Activated CD4-positive, alpha-beta memory T cell treated with anti-CD3 and anti-CD28 coated beads for 36 hours (primary cell): ENCODE measurements at regions of chr1 and their contacts with region 1.

Region 1: GRCh38 chr1:179293340-179294327 is at the start of gene SOAT1:
- DNase-seq: peak; percentile 95
- H3K4me3 Mint-ChIP-seq: peak within 1 kb of the TSS; percentile 97
- H3K27ac Mint-ChIP-seq: peak within 1 kb of the TSS; percentile 91
- H3K4me1 Mint-ChIP-seq: peaks cover 41% of the 10 kb centered on the region
- H3K27me3 Mint-ChIP-seq: no peaks in the 10 kb centered on the region
- total RNA-seq, gene SOAT1: 37.8 to 42.9 TPM

Region 2: DNA sequence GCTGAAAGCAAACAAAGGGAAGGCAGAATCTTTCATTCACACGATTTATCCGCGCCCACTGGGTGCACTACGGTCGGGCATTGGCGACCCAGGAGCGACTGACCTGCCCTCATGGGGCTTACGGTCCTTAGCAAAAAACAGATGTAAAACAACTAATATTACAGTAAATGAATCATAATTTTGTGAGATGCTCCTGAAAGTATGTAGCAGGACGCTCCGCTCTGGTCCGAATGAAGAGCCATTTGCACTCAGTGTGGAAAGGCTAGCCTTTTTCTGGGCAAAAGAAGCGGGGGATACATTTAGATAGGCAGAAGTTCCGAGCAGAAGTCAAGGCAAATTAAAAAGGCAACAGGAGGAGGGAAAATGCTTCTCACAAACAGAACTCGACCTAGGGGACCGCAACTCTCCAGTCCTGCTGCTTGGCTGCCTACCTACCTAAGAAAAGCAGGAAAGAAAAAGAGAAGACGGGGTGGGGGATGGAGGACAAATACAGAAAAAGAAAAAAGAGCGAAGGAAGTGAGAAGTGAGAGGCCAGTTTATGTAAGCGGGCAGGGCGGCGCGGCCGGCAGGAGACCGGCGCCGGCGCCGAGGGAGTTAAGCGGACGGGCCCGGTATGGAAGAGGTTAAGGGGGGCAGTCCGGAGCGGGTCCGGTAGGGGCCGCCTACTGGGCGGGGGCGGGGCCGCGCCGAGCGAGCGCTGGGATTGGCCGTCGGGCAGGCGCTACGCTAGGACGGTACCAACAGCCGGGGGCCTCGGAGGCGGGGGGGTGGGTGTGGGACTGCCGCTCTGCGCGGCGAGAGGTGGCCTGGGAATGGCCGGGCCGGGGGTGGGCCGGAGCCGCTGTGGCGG is 268.3 kb before region 1 on chr1 and contains the start of gene FAM20B:
- CTCF ChIA-PET with region 1: no interaction called
- POLR2A ChIA-PET with region 1: no interaction called
- intact Hi-C with region 1: loop called (anchors 2 kb)
- DNase-seq: peak; percentile 94
- H3K4me3 Mint-ChIP-seq: peak within 1 kb of the TSS; percentile 87
- H3K27ac Mint-ChIP-seq: peak within 1 kb of the TSS; percentile 85
- H3K4me1 Mint-ChIP-seq: peaks cover 37% of the 10 kb centered on the region
- H3K27me3 Mint-ChIP-seq: no peaks in the 10 kb centered on the region
- total RNA-seq, gene FAM20B: 38.1 to 39.2 TPM

Region 3: GRCh38 chr1:179121159-179121938 is 172.3 kb before region 1 on chr1:
- CTCF ChIA-PET with region 1: interaction called, 24 read pairs
- POLR2A ChIA-PET with region 1: no interaction called
- intact Hi-C with region 1: loop called (anchors 1 kb)
- DNase-seq: peak; percentile 49
- H3K4me3 Mint-ChIP-seq: no peak overlapping the region
- H3K27ac Mint-ChIP-seq: no peak overlapping the region
- H3K4me1 Mint-ChIP-seq: peaks cover 7% of the 10 kb centered on the region
- H3K27me3 Mint-ChIP-seq: no peaks in the 10 kb centered on the region

Region 4: GRCh38 chr1:179142889-179143299 is 150.7 kb before region 1 on chr1:
- CTCF ChIA-PET with region 1: interaction called, 3 read pairs
- POLR2A ChIA-PET with region 1: no interaction called
- intact Hi-C with region 1: loop called (anchors 2 kb)
- DNase-seq: no peak
- H3K4me3 Mint-ChIP-seq: no peak overlapping the region
- H3K27ac Mint-ChIP-seq: no peak overlapping the region
- H3K4me1 Mint-ChIP-seq: peaks cover 26% of the 10 kb centered on the region
- H3K27me3 Mint-ChIP-seq: no peaks in the 10 kb centered on the region

Region 5: DNA sequence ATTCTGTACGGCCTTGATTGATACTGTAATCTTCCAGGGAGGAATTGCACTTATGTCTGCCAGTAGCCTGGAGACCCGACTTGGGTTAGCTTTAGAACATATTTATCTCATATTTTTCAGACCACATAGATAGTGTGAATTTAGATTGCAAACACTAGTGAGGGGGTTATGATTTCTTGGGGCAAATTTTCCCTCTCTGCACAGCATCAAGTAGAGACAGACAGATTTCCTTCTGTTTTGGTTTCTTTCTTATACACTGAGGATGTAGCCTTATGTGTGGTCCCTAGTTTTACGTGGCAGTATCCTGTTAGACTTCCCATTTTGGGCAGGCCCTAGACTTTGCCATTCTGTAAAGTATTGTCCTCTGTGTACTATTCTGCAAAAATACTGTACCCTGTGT is 28.9 kb after region 1 on chr1:
- CTCF ChIA-PET with region 1: no interaction called
- POLR2A ChIA-PET with region 1: interaction called, 4 read pairs
- intact Hi-C with region 1: loop called (anchors 1 kb)
- DNase-seq: no peak
- H3K4me3 Mint-ChIP-seq: no peak overlapping the region
- H3K27ac Mint-ChIP-seq: no peak overlapping the region
- H3K4me1 Mint-ChIP-seq: peaks cover 33% of the 10 kb centered on the region
- H3K27me3 Mint-ChIP-seq: no peaks in the 10 kb centered on the region